GM13976 (cell line): ENCODE measurements at regions of chr11 and their contacts with region 1.

Region 1: GRCh38 chr11:36478700-36479329 is 31.3 kb downstream of the TRAF6 start:
- DNase-seq: peak; percentile 30
- CTCF ChIP-seq: no peak

Region 2: GRCh38 chr11:36292311-36292722 is 186.5 kb before region 1 on chr11:
- in situ Hi-C with region 1: loop called (anchors 10 kb)
- DNase-seq: peak; percentile 74
- CTCF ChIP-seq: peak; percentile 34